Common myeloid progenitor, CD34-positive (primary cell): ENCODE measurements at regions of chr20 and their contacts with region 1.

Region 1: GRCh38 chr20:45322952-45323383 is 14.9 kb upstream of the MATN4 start:
- DNase-seq: peak; percentile 77 to 90 (median 89)
- H3K4me3 ChIP-seq: no peak overlapping the region
- H3K27ac ChIP-seq: no peak overlapping the region
- H3K4me1 ChIP-seq: peaks cover 2 to 29% (median 16%) of the 10 kb centered on the region in 4 experiments
- H3K27me3 ChIP-seq: peaks cover 0 to 2% (median 0%) of the 10 kb centered on the region in 5 experiments

Region 2: DNA sequence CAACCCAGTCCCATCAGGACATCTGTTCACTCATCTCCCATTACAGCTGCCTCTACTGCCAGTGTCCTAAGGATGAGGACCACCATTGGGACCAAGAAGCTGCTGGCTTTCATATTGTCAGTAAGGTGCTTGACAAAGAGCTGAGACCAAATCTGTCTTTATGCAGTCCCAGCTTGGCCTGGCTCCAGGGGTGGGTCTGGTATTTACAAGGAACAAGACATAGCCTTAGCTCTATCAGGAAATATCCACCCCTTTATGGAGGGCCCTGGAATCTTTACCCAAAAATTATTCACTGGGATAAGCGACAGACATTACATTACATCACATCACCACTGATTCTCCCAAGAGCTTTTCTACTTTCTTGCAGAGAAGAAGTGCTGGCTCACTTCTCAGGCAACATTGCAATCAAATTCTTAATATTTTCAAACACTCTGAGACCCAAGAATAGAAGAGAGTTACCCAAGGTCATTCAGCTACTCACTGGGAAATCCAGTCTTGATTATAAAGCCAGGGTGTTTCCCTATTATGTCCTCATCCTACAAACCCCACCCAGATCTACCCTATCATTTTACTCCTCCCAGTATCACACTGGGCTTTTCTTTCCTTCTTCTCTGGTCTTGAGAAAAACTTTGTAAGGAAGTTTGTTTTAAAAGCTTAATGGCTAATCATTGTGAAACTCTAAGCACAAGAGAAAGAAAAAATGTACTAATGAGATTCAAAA is 159.7 kb before region 1 on chr20:
- CTCF ChIA-PET with region 1: no interaction called
- POLR2A ChIA-PET with region 1: no interaction called
- DNase-seq: no peak
- H3K4me3 ChIP-seq: no peak overlapping the region
- H3K27ac ChIP-seq: no peak overlapping the region
- H3K4me1 ChIP-seq: no peaks in the 10 kb centered on the region
- H3K27me3 ChIP-seq: peaks cover 0 to 2% (median 0%) of the 10 kb centered on the region in 5 experiments

Region 3: DNA sequence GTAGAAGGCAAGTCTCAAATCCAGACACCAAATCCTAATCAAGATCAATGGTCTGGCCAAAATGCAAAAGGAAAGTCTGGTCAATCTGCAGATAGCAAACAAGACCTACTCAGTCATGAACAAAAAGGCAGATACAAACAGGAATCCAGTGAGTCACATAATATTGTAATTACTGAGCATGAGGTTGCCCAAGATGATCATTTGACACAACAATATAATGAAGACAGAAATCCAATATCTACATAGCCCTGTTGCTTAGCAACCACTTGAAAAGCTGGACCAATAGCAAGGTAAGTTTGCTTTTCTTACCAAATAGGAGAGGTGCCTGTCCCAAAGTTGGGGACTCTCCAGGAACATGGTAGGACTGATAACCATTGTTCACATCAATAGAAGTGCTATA is 99.8 kb before region 1 on chr20:
- CTCF ChIA-PET with region 1: no interaction called
- POLR2A ChIA-PET with region 1: no interaction called
- DNase-seq: no peak
- H3K4me3 ChIP-seq: no peak overlapping the region
- H3K27ac ChIP-seq: no peak overlapping the region
- H3K4me1 ChIP-seq: no peaks in the 10 kb centered on the region
- H3K27me3 ChIP-seq: peaks cover 4 to 22% (median 15%) of the 10 kb centered on the region in 5 experiments

Region 4: DNA sequence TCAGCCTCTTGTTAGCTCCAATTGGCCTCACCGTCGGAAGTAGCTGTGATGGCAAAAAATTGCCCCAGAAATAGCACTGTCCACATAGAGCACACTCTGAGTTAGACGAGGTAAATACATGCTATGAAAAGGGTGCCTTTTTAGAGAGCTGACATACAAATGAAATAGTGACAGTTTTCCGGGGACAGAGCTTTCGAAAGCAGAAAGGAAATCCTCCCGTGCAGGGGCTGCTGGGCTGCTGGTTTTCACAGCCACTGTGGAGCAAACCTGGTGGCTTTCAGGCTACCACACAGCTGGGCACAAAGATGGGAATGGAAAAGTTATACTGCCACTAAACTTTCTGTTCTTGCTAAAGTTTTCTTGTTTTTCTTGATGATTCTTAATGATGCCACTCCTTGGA is 76.9 kb before region 1 on chr20:
- CTCF ChIA-PET with region 1: no interaction called
- POLR2A ChIA-PET with region 1: no interaction called
- DNase-seq: no peak
- H3K4me3 ChIP-seq: peak overlapping the region in 1 of 7 experiments; percentile 23
- H3K27ac ChIP-seq: no peak overlapping the region
- H3K4me1 ChIP-seq: peaks cover 0 to 4% (median 0%) of the 10 kb centered on the region in 4 experiments
- H3K27me3 ChIP-seq: peaks cover 5 to 28% (median 12%) of the 10 kb centered on the region in 5 experiments

Region 5: DNA sequence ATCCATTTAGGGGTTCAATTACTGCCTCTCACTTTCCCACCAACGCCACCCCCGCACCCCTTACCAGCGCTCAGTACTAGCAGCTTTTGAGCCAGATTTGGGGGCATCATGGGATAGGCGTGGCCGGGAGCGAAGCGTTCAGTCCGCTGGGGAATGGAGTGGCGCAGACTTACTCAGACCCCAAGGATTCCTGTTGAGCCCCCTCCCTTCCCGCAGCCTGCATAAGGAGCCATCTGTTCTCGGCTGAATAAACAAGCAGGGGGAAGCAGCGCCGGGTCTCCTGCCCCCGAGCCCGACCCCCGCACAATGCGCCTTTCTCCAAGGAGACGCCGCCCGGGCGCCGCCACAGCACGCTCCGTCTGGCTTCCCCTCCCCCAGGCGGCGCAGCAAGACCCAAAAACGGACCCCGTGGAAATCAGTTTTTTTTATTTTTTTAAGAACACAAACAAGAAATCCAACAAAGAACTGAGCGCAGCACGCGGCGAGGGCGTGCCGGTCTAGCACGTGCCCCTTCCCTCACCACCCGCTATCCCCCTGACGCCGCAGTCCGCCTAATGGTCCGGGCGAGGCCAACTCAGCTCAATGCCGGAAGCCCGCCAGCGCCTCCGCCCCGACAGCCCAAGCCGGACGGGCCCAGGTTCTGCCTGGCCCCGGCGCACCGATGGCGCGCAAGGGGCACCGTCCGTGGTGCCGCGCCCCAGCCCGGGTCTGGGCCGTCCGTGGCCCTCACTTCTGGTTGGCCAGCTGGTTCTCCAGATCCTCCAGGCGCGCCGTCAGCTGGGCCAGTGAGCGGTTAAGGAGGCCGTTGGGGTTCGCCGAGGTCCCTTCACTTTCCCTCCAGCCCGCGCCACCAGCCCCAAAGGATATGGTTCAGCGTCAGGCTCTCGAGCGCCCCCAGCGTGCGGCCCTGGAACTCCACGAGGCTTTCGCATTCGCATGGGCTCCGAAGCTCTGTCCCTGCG is 29.6 kb before region 1 on chr20:
- CTCF ChIA-PET with region 1: interaction called, 14 read pairs
- POLR2A ChIA-PET with region 1: no interaction called
- DNase-seq: peak; percentile 70 to 86 (median 84)
- H3K4me3 ChIP-seq: peak overlapping the region; percentile 13 to 75 (median 60)
- H3K27ac ChIP-seq: no peak overlapping the region
- H3K4me1 ChIP-seq: peaks cover 0 to 9% (median 8%) of the 10 kb centered on the region in 4 experiments
- H3K27me3 ChIP-seq: peaks cover 3 to 39% (median 16%) of the 10 kb centered on the region in 5 experiments

Region 6: GRCh38 chr20:45362804-45363610 is 40.0 kb after region 1 on chr20 and contains the start of gene SYS1:
- CTCF ChIA-PET with region 1: interaction called, 33 read pairs
- POLR2A ChIA-PET with region 1: interaction called, 4 read pairs
- DNase-seq: peak; percentile 98 to 99 (median 98)
- H3K4me3 ChIP-seq: peak within 1 kb of the TSS; percentile 59 to 92 (median 85)
- H3K27ac ChIP-seq: peak within 1 kb of the TSS; percentile 89 to 95
- H3K4me1 ChIP-seq: peaks cover 15 to 58% (median 44%) of the 10 kb centered on the region in 4 experiments
- H3K27me3 ChIP-seq: no peaks in the 10 kb centered on the region

Region 7: DNA sequence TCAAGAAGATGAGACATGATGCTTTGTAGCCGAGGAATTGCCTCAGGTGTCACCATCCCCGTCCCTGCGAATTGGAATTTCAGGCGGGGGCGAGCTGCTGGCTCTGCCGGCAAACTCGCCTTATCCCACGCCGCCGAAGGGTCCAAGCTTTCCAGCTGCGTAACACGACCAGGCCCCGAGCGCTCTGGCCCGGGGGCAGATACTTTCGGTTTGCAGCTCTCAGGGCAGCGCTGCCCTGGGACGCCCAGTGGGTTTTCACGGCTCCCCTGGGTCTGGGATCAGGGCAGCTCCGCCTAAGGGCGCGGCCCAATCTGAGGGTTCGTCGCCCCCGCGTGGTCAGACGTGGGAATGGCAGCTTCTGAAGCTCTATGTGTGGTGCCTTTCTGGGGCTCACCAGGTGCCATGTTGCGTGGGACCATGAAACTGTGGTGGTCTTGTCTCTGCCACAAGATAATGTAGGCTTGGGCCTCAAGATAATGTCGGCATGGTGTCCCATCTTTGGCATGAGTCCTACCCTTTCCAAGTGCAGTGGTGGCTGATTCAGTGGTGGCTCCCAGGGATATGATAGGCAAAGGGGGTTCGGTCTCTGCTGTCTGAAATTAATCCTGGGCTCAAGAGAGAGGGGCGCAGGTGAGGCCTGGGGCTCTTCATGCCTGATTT is 113.9 kb after region 1 on chr20:
- CTCF ChIA-PET with region 1: interaction called, 37 read pairs
- POLR2A ChIA-PET with region 1: interaction called, 3 read pairs
- DNase-seq: peak; percentile 85 to 91 (median 89)
- H3K4me3 ChIP-seq: peak overlapping the region; percentile 22 to 83 (median 60)
- H3K27ac ChIP-seq: peak overlapping the region; percentile 41 to 62
- H3K4me1 ChIP-seq: peaks cover 0 to 30% (median 14%) of the 10 kb centered on the region in 4 experiments
- H3K27me3 ChIP-seq: no peaks in the 10 kb centered on the region

Region 8: DNA sequence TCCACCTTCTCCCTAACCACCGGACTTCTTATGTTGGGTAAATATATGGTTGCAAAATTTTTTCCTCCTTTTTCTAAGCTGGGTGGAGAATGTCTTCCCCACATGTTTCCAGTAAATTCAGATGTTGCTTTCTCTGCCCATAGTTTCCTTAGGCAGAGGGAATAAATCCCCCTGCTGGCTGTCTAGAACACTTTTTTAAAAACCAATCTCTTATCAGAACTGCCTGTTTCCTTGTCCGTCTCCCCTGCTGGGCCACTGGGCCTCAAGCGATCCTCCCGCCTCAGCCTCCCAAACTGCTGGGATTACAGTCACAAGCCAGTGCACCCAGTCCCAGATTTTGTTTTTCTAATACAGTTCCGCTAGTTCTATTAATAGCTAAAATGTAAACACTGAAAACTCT is 136.6 kb after region 1 on chr20:
- CTCF ChIA-PET with region 1: interaction called, 88 read pairs
- POLR2A ChIA-PET with region 1: no interaction called
- DNase-seq: peak in 1 of 3 donors; percentile 22
- H3K4me3 ChIP-seq: no peak overlapping the region
- H3K27ac ChIP-seq: no peak overlapping the region
- H3K4me1 ChIP-seq: no peaks in the 10 kb centered on the region
- H3K27me3 ChIP-seq: no peaks in the 10 kb centered on the region

Region 9: GRCh38 chr20:45771182-45771759 is 448.3 kb after region 1 on chr20:
- CTCF ChIA-PET with region 1: interaction called, 14 read pairs
- POLR2A ChIA-PET with region 1: no interaction called
- DNase-seq: peak; percentile 77 to 90 (median 84)
- H3K4me3 ChIP-seq: no peak overlapping the region
- H3K27ac ChIP-seq: no peak overlapping the region
- H3K4me1 ChIP-seq: peaks cover 0 to 6% (median 2%) of the 10 kb centered on the region in 4 experiments
- H3K27me3 ChIP-seq: peaks cover 0 to 2% (median 0%) of the 10 kb centered on the region in 5 experiments